Thyroid gland (tissue), 4 donors: ENCODE measurements at regions of chr3 and their contacts with region 1.

Region 1: DNA sequence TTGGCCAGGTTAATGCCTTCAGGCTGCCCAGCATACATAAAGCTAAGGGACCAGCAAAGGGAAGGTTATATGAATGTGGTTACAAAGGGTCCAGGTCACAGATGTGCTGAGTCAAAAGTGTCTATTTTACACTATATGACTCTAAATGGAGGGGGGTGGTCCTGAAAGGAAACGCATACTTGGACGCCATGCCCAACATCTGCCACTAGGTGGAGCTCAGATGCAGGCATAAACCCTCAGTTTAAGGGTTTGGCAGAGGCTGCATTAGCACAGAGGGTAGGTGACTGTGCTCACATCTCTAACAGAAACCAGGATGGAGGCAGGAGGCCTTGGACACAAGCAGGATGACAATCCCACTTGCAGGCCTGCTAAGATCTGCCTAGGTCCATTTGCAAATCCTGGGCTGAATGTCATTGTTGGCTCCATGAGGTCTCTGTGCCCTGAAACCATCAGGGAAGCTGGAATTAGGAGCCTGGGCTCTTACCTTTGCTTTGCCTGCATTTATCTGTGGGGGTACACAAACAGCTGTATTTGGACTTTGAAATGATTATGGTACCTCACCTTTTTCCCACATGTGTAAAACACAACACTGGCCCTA is 55.8 kb downstream of the ZNF621 start:
- DNase-seq: peak; percentile 71 to 72
- H3K4me3 ChIP-seq: no peak overlapping the region
- H3K27ac ChIP-seq: no peak overlapping the region
- H3K4me1 ChIP-seq: peaks cover 23 to 24% of the 10 kb centered on the region in 2 donors
- H3K27me3 ChIP-seq: no peaks in the 10 kb centered on the region
- CTCF ChIP-seq: peak; percentile 84 to 95 (median 92)
- POLR2A ChIP-seq: no peak

Region 2: GRCh38 chr3:40971191-40972168 is 390.9 kb after region 1 on chr3:
- intact Hi-C with region 1: loop called (anchors 10 kb)
- DNase-seq: peak; percentile 76 to 84
- H3K4me3 ChIP-seq: no peak overlapping the region
- H3K27ac ChIP-seq: peak overlapping the region; percentile 72 to 81 (median 75)
- H3K4me1 ChIP-seq: peaks cover 20 to 36% of the 10 kb centered on the region in 2 donors
- H3K27me3 ChIP-seq: no peaks in the 10 kb centered on the region
- CTCF ChIP-seq: peak in 3 of 6 experiments; percentile 6 to 23 (median 11)
- POLR2A ChIP-seq: no peak

Region 3: GRCh38 chr3:41199866-41200668 is 619.5 kb after region 1 on chr3:
- intact Hi-C with region 1: loop called (anchors 10 kb)
- DNase-seq: peak; percentile 38 to 45
- H3K4me3 ChIP-seq: peak overlapping the region; percentile 93 to 97 (median 96)
- H3K27ac ChIP-seq: peak overlapping the region; percentile 99
- H3K4me1 ChIP-seq: peaks cover 26 to 32% of the 10 kb centered on the region in 2 donors
- H3K27me3 ChIP-seq: no peaks in the 10 kb centered on the region
- CTCF ChIP-seq: no peak
- POLR2A ChIP-seq: no peak

Region 4: GRCh38 chr3:41881233-41881821 is 1300.7 kb after region 1 on chr3:
- intact Hi-C with region 1: loop called (anchors 5 kb)
- DNase-seq: no peak
- H3K4me3 ChIP-seq: no peak overlapping the region
- H3K27ac ChIP-seq: no peak overlapping the region
- H3K4me1 ChIP-seq: peaks cover 4 to 7% of the 10 kb centered on the region in 2 donors
- H3K27me3 ChIP-seq: no peaks in the 10 kb centered on the region
- CTCF ChIP-seq: peak; percentile 50 to 86 (median 60)
- POLR2A ChIP-seq: no peak